HepG2 (cell line): ENCODE measurements at regions of chr19 and their contacts with region 1.

Region 1: GRCh38 chr19:13604902-13605586 is 98.8 kb upstream of the CACNA1A start:
- DNase-seq: no peak
- ATAC-seq: no peak
- H3K4me3 ChIP-seq: no peak overlapping the region
- H3K27ac ChIP-seq: no peak overlapping the region
- H3K4me1 ChIP-seq: peaks cover 5% of the 10 kb centered on the region; the same call in 1 of the 2 replicates
- H3K27me3 ChIP-seq: peaks cover 0 to 1% of the 10 kb centered on the region in 2 experiments; a peak in 1 of 5 replicates
- CTCF ChIP-seq: no peak
- EP300 ChIP-seq: no peak
- POLR2A ChIP-seq: no peak
- RAD21 ChIP-seq: no peak

Region 2: DNA sequence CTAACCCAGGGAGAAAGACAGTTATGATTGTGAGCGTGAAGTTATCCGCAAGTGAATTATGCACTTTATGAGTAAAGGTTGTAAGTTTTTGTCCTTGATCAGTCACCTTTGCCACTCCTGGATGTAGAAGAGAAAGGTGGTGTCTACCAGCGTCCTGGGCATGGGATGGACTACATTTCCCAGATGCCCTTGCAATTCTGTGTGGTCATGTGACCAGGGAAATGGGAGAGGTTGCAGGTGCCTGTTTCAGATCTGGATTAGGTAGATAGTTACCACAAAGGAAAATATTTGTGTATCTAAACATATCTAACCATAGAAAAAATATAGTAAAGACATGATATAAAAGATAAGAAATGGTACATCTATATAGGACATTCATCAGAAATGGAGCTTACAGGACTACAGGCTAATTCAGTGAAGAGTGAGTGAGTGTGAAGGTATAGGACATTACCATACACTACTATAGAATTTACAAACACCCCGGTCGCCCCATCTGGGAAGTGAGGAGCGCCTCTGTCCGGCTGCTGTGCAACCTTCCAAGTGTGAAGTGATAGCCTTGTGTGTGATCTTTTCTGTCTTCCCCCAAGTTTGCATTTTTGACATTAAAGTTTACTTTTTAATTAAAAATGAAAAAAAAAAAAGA is 47.2 kb before region 1 on chr19:
- CTCF ChIA-PET with region 1: no interaction called
- POLR2A ChIA-PET with region 1: no interaction called
- in situ Hi-C with region 1: no loop called
- intact Hi-C with region 1: no loop called
- DNase-seq: no peak
- ATAC-seq: no peak
- H3K4me3 ChIP-seq: no peak overlapping the region
- H3K27ac ChIP-seq: no peak overlapping the region
- H3K4me1 ChIP-seq: no peaks in the 10 kb centered on the region
- H3K27me3 ChIP-seq: no peaks in the 10 kb centered on the region; a peak in 1 of 5 replicates
- CTCF ChIP-seq: no peak
- EP300 ChIP-seq: no peak
- POLR2A ChIP-seq: no peak
- RAD21 ChIP-seq: no peak

Region 3: DNA sequence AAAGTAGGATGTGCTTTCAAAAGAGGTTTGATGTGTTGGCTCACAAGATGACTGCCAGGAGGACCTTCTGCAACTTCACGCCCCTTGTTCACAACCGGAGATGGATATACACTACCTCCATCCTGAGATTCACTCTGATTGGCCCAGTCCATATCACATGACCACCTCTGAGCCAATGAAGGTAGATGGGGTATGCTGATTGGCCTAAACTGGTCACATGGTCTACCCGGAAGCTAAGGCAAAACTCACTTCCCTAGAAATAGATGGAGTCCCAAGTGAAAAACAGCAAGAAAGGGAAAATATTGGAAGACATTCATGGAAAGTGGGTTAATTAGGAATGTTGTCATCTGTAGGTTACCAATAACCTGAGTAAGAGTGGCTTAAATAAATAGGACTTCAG is 39.6 kb after region 1 on chr19:
- CTCF ChIA-PET with region 1: no interaction called
- POLR2A ChIA-PET with region 1: no interaction called
- in situ Hi-C with region 1: no loop called
- intact Hi-C with region 1: no loop called
- DNase-seq: no peak
- ATAC-seq: no peak
- H3K4me3 ChIP-seq: no peak overlapping the region
- H3K27ac ChIP-seq: no peak overlapping the region
- H3K4me1 ChIP-seq: no peaks in the 10 kb centered on the region
- H3K27me3 ChIP-seq: no peaks in the 10 kb centered on the region
- CTCF ChIP-seq: no peak
- EP300 ChIP-seq: no peak
- POLR2A ChIP-seq: no peak
- RAD21 ChIP-seq: no peak

Region 4: GRCh38 chr19:13718733-13719132 is 113.7 kb after region 1 on chr19:
- CTCF ChIA-PET with region 1: no interaction called
- POLR2A ChIA-PET with region 1: no interaction called
- in situ Hi-C with region 1: loop called (anchors 5 kb)
- intact Hi-C with region 1: no loop called
- DNase-seq: no peak
- ATAC-seq: no peak
- H3K4me3 ChIP-seq: no peak overlapping the region
- H3K27ac ChIP-seq: no peak overlapping the region
- H3K4me1 ChIP-seq: 0 out of 2 replicates have a peak, but pooled peaks cover 6% of the 10 kb centered on the region
- H3K27me3 ChIP-seq: peaks cover 0 to 17% of the 10 kb centered on the region in 2 experiments; a peak in 2 of 5 replicates
- CTCF ChIP-seq: peak; percentile 54
- EP300 ChIP-seq: no peak
- POLR2A ChIP-seq: no peak
- RAD21 ChIP-seq: no peak

Region 5: DNA sequence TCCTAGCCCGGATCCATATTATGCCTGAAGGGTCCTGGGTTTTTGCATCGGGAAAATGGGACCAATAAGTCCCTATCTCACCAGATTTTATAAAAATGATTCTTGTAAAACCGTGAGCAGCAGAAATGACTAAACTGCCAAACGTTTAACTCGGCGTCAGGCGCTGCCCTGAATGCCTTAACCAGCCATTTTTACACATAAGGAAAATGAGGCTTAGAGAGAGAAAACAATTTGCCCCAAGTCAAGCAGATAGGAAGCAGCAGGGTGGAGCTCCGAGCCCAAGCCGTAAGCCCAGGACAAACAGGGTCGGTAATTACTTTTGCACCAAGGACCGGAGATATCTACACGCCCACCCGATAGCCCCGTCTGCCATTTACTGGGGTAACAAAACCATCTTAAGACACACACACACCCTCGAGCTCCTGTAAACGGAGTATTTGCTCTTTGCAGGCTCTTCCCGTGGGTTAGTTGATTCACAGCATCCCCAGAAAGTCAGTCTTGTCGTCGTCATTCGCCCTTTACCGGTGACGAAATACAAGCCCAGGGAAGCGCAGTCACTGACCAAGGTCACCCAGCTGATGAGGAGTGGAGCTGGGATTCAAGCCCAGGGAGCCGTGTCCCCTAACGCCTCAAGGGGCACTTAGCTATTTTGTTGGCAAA is 143.3 kb after region 1 on chr19:
- CTCF ChIA-PET with region 1: no interaction called
- POLR2A ChIA-PET with region 1: no interaction called
- in situ Hi-C with region 1: no loop called
- intact Hi-C with region 1: no loop called
- DNase-seq: no peak
- ATAC-seq: no peak
- H3K4me3 ChIP-seq: peak overlapping the region; percentile 69 to 98 (median 90)
- H3K27ac ChIP-seq: peak overlapping the region; percentile 66
- H3K4me1 ChIP-seq: peaks cover 33% of the 10 kb centered on the region
- H3K27me3 ChIP-seq: no peaks in the 10 kb centered on the region; a peak in 1 of 5 replicates
- CTCF ChIP-seq: no peak
- EP300 ChIP-seq: no peak
- POLR2A ChIP-seq: 0 out of 4 replicates have a peak, but pooled peaks of 1 of the 2 experiments have one; percentile 6
- RAD21 ChIP-seq: no peak